Cardiac septum (tissue), 1 donor: ENCODE measurements at regions of chr1 and their contacts with region 1.

Region 1: GRCh38 chr1:180178511-180179161 is 24.0 kb downstream of the QSOX1 start:
- DNase-seq: peak; percentile 86

Region 2: GRCh38 chr1:179872558-179872957 is 306.1 kb before region 1 on chr1:
- intact Hi-C with region 1: loop called (anchors 5 kb)
- DNase-seq: no peak